Activated CD8-positive, alpha-beta T cell treated with anti-CD3 and anti-CD28 coated beads, Interleukin-2, amount 10 ng/mL, durations not matched to agents 7 days and 5 days (primary cell): ENCODE measurements at regions of chr10 and their contacts with region 1.

Region 1: DNA sequence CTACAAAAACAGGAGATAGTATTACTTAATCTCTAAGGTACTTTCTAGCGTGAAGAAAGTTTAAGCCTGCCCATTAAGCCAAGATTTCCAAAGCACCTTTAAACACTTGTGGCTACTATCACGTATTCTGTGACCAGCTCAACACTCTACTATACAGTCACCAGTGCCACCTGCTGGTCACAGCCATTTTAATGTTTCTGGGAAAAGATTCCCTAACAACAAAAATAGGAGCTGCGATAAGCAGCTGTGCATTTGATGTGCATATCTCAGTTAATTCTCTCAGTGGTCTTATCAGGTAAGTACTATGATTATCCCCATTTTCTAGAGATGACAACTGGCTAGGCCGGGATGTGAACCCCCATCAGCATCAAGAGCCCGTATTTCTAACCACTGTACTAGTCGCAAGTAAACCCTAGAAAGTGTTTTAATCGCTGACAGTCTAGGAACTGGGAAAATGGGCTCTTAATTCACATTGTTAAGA is 860 bp downstream of the SEC31B start:
- DNase-seq: peak; percentile 77
- ATAC-seq: peak; percentile 79
- H3K4me3 Mint-ChIP-seq: no peak overlapping the region
- H3K27ac Mint-ChIP-seq: peak overlapping the region; percentile 35
- H3K4me1 Mint-ChIP-seq: peaks cover 41% of the 10 kb centered on the region
- H3K27me3 Mint-ChIP-seq: no peaks in the 10 kb centered on the region

Region 2: GRCh38 chr10:100338434-100339036 is 180.3 kb before region 1 on chr10:
- CTCF ChIA-PET with region 1: interaction called, 33 read pairs
- POLR2A ChIA-PET with region 1: no interaction called
- DNase-seq: peak; percentile 88
- ATAC-seq: peak; percentile 90
- H3K4me3 Mint-ChIP-seq: no peak overlapping the region
- H3K27ac Mint-ChIP-seq: peak overlapping the region; percentile 60
- H3K4me1 Mint-ChIP-seq: peaks cover 29% of the 10 kb centered on the region
- H3K27me3 Mint-ChIP-seq: peaks cover 9% of the 10 kb centered on the region

Region 3: DNA sequence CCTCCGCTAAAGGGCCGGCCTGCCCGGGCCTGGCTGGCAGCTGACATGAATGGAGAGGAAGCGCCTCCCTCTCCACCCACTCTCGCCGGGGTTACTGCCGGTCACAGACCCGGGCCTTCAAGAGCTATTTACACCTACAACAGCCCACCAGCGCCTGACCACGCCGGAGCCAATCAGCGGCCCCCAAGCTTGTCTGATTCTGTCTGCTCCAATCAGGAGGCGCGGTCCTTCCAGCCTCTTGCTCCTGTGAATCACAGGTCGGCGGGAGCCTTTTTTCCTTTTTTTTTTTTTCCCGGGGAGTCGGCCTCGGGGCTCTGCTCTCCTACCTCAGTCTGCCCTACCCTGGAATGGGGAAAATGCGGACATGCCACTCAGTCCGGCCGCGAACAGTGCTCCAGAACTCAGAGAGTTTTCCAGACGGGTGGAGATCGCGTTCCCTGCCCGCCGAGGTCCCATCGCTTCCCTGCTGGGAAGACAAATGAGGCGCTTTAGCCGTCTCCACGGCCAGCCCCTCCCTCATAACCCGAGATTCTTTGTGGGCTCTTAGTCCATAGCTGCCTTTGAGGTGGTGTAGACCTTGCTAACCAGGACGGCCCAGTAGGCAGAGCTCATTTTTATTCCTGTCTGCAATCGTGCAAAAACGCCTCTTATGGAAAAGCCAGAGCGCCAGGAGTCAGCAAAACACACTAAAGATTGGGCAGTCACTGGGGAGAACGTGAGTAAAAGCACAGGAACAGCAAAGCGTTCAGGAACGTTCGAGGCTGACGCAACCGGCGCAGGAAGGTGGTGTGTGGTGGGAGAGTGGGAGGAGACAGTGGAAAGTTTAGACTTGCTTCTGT is 145.3 kb before region 1 on chr10:
- CTCF ChIA-PET with region 1: interaction called, 14 read pairs
- POLR2A ChIA-PET with region 1: interaction called, 3 read pairs
- DNase-seq: peak; percentile 96
- ATAC-seq: peak; percentile 83
- H3K4me3 Mint-ChIP-seq: no peak overlapping the region
- H3K27ac Mint-ChIP-seq: no peak overlapping the region
- H3K4me1 Mint-ChIP-seq: peaks cover 50% of the 10 kb centered on the region
- H3K27me3 Mint-ChIP-seq: no peaks in the 10 kb centered on the region

Region 4: DNA sequence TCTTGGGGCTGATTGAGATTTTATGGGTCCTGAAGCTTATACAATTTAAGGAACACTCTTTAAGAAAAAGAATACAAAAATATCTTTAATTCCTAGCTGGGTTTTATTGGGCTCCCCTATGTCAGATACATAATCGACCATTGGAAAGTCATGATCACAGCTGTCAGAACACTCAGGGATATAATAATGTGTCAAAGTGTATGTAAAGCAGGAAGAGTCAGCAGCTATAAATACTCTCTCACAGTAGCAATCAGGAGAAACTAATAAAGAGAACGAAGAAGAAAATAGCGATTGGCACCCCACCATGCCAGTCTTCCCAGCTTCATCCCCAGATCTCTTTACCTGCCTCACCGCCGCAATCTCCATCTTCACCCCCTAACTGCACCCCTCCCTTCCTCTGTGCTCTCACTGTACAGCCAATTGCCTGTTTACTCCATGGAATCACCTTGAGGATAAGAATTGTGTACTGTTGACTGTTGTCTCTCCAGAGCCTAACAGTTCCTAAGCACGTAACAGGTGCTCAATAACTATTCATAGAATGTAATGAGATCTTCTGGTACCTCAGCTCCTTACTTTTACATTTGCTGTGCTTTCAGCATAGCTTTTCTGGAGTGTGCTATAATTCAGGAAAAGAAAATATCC is 80.0 kb before region 1 on chr10:
- CTCF ChIA-PET with region 1: interaction called, 146 read pairs
- POLR2A ChIA-PET with region 1: interaction called, 3 read pairs
- DNase-seq: no peak
- ATAC-seq: no peak
- H3K4me3 Mint-ChIP-seq: no peak overlapping the region
- H3K27ac Mint-ChIP-seq: no peak overlapping the region
- H3K4me1 Mint-ChIP-seq: peaks cover 4% of the 10 kb centered on the region
- H3K27me3 Mint-ChIP-seq: no peaks in the 10 kb centered on the region

Region 5: DNA sequence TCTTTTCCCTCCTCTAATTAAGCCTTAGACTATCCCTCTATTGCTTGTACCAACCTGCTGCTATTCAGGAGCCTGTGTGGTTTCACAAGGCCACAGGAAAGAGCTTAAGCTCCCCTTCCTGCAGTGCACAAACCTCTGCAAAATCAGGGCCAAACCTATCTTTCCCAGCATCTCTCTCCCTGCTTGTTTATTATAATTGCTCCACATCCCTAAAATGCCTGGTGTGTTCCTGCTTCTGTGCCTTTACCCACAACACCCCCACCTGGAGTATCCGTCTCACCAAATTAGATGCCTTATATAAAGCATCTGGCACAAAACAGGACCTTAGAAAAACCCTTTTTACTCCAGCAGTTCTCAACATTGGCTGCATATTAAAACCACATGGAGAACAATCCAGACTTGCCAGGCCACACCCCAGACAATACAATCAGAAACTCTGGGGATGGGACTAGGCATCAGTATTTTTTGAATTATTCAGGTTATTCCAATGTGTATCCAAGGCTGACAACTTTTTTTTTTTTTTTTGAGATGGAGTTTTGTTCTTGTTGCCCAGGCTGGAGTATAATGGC is 15.8 kb before region 1 on chr10:
- CTCF ChIA-PET with region 1: interaction called, 165 read pairs
- POLR2A ChIA-PET with region 1: interaction called, 62 read pairs
- DNase-seq: no peak
- ATAC-seq: no peak
- H3K4me3 Mint-ChIP-seq: no peak overlapping the region
- H3K27ac Mint-ChIP-seq: peak overlapping the region; percentile 77
- H3K4me1 Mint-ChIP-seq: peaks cover 89% of the 10 kb centered on the region
- H3K27me3 Mint-ChIP-seq: no peaks in the 10 kb centered on the region

Region 6: DNA sequence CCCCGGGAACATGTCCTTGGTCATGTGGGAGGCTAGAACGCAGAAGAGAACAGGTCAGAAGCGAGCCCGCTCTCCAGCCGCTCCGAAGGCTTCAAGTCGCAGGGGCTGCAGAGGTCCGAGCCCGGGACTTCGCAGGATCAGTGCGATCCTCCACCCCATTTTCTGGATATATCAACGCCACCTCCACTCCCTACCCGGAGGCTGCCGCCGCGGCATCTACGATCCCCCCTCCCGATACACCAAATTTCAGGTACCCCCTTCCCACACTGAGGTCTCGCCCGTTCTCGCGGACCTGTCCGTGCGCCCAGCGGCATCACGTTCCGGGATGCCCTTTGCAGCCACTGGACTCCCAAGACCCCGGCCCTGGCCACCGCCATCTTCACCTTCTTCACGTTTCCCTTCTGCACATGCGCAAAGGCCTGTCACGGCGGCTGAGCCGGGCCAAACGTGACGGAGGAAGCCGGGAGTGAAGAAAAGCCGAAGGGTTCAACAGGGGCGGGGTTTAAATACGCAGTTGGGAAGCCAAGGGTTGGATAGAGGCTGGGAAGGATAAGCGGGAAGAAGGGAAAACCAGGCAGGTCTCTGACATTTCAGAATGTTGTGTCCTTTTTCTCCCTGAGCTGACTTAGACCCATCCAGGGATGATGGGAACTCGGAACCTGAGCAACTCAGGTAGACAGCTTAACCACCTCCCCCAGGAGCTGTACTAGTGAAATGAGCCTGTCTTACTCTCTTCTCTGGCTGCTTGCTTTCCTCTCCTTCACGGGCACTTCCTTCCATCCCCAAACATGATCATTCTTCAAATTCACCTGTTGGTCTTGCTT is 10.9 kb after region 1 on chr10 and contains the start of gene NDUFB8:
- CTCF ChIA-PET with region 1: interaction called, 60 read pairs
- POLR2A ChIA-PET with region 1: interaction called, 5 read pairs
- DNase-seq: peak; percentile 92
- ATAC-seq: peak; percentile 89
- H3K4me3 Mint-ChIP-seq: peak within 1 kb of the TSS; percentile 100
- H3K27ac Mint-ChIP-seq: peak within 1 kb of the TSS; percentile 99
- H3K4me1 Mint-ChIP-seq: peaks cover 44% of the 10 kb centered on the region
- H3K27me3 Mint-ChIP-seq: no peaks in the 10 kb centered on the region
- total RNA-seq, gene NDUFB8: 290 to 293 TPM

Region 7: DNA sequence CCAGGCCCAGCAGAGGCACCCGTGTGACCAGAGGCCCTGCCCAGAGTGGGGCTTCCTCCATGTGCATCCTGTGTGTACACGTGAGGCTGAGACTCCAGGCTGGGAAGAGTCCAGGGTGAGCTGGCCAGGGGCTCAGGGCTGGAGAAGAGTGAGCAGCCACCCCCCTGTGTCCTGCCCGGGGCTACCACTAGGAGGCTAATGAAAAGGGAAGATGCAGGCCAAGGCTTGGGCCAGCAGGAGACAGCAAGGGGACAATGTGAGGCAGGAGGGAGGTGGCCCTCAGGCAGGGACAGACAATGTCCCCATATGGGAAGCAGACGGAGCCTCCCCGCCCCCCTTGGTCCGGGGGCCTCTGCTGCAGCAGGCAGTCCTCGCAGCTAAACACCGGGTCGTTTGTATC is 119.0 kb after region 1 on chr10:
- CTCF ChIA-PET with region 1: no interaction called
- POLR2A ChIA-PET with region 1: no interaction called
- DNase-seq: no peak
- ATAC-seq: peak; percentile 49
- H3K4me3 Mint-ChIP-seq: no peak overlapping the region
- H3K27ac Mint-ChIP-seq: no peak overlapping the region
- H3K4me1 Mint-ChIP-seq: no peaks in the 10 kb centered on the region
- H3K27me3 Mint-ChIP-seq: peaks cover 50% of the 10 kb centered on the region